ENCODE measurements at regions of chr20 and their contacts with region 1.

Region 1: GRCh38 chr20:48502850-48503815 is 324.7 kb downstream of the PREX1 start:
- DNase-seq: peak in 1 of 2 donors; percentile 70
- H3K4me3 ChIP-seq: no peak overlapping the region
- CTCF ChIP-seq: no peak
- POLR2A ChIP-seq: no peak

Region 2: DNA sequence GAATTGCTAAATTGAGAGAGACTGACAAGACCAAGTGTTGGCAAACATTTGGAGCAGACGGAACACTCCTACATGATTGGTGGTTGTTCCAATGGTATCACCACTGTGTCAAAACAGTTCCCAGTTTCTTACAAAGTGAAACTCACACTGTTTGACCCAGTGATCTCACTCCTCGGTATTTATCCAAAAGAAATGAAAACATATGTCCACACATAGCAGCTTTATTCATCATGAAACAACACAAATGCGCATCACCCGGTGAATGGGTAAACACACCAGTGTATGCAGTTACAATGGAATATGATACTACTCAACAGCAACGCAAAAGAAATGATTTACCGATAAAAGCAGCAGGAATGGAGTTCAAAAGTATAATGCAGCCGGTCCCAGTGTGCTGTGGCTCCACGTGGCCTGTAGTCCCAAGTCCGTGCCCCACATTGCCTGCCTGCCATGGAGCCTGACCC is 643.8 kb before region 1 on chr20:
- intact Hi-C with region 1: no loop called
- DNase-seq: no peak
- H3K4me3 ChIP-seq: no peak overlapping the region
- CTCF ChIP-seq: no peak
- POLR2A ChIP-seq: no peak

Region 3: DNA sequence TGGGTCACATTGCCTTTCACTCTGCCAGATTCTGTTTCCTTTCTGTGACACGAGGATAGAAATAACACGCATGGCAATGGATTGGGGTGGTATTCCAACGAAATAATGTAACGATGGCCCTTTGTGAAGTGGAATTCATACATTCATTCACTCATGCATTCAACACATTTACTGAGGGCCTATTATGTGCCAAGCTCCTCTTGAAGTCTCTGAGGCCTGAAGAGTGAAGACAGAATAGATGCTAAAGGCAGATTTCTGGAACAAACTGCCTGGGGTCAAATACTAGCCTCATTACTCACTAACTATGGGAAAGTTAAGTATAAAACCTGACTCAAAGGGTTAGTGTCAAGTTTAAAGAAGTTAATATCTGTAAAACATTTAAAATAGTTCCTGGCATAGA is 438.2 kb before region 1 on chr20:
- intact Hi-C with region 1: loop called (anchors 5 kb)
- DNase-seq: no peak
- H3K4me3 ChIP-seq: no peak overlapping the region
- CTCF ChIP-seq: no peak
- POLR2A ChIP-seq: no peak

Region 4: DNA sequence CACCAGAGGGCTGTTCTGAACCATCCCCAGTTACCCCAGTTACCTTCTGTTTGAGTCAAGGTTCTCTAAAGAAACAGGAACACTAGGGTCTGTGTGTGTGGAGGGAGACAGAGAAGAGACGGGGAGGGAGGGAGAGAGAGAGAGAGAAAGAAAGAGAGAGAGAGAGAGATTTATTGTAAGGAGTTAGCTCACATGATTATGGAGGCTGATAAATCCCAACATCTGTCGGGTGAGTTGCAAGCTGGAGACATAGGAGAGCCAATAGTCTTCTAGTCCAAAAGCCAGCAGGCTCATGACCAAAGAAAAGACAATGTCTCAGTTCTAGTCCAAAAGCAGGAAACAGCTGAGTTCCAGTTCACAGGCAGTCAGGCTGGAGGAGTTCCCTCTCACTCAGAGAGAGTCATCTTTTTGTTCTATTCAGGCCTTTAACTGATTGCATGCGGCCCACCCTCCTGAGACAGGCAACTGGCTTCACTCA is 92.0 kb before region 1 on chr20:
- intact Hi-C with region 1: no loop called
- DNase-seq: no peak
- H3K4me3 ChIP-seq: no peak overlapping the region
- CTCF ChIP-seq: no peak
- POLR2A ChIP-seq: no peak